ENCODE measurements at regions of chr2 and their contacts with region 1.

Region 1: DNA sequence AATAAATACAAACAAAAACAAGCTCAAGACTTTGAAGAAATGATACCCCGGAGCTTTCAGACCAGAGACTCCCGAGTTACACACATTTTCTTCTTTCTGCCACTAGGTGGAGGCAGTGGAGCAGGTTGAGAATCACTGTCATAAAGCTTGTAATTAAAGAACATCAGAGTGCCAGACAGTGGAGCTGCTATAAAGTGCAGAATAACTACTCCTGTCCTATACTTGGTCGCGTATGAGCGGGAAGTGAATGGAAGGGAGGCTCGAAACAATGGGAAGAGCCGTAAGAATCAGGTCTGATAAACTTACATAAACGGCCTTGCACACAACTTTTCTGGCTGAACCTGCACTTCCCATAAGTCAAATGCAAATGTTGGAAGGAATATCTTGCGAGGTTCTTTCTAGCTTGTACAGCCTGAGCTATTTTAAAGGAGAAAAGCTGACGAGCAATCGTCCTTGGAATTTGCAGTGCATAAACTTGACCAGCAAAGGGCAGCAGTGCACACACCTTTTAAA is 189.0 kb downstream of the RPIA start:
- DNase-seq: peak; percentile 84
- H3K4me3 ChIP-seq: peak overlapping the region; percentile 60
- H3K27ac ChIP-seq: peak overlapping the region; percentile 100
- H3K4me1 ChIP-seq: peaks cover 47% of the 10 kb centered on the region
- CTCF ChIP-seq: peak; percentile 80

Region 2: GRCh38 chr2:88753833-88754584 is 126.5 kb before region 1 on chr2:
- CTCF ChIA-PET with region 1: interaction called, 4 read pairs
- POLR2A ChIA-PET with region 1: interaction called, 93 read pairs
- intact Hi-C with region 1: no loop called
- DNase-seq: peak; percentile 98
- H3K4me3 ChIP-seq: peak overlapping the region; percentile 37
- H3K27ac ChIP-seq: peak overlapping the region; percentile 96
- H3K4me1 ChIP-seq: peaks cover 81% of the 10 kb centered on the region
- CTCF ChIP-seq: no peak

Region 3: GRCh38 chr2:88838165-88838635 is 42.3 kb before region 1 on chr2:
- CTCF ChIA-PET with region 1: interaction called, 7 read pairs
- POLR2A ChIA-PET with region 1: interaction called, 311 read pairs
- intact Hi-C with region 1: loop called (anchors 1 kb)
- DNase-seq: peak; percentile 100
- H3K4me3 ChIP-seq: peak overlapping the region; percentile 66
- H3K27ac ChIP-seq: peak overlapping the region; percentile 100
- H3K4me1 ChIP-seq: peaks cover 99% of the 10 kb centered on the region
- CTCF ChIP-seq: no peak

Region 4: DNA sequence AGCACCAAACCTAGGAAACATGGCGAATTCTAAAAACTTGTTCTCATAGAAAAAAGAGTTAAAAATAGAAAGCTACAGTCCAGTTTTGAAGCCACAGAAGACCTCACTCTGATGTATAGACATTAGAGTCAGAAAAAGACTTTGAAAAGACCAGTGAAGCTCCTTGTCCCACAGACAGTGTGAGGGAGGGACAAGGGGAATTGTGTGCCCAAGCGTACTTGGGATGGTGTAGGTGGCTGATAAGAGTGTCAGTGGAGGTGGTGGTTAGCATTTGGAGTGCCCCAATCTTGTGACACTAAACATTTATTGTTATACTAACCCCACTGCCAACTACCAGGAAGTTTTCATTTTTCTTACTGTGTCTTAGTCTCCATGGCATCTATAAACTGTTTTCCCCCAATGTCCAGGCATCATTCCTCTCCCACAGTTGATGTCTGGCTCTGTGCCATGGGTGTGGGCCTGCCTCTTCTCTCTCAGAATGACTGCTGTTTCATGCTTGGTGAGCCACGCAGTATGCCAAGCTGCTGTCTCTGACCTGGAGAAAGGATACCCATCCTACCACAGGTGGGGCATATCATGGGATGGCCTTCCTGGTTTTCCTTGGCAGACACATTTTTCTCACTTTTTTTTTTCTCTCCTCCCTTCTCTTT is 27.6 kb before region 1 on chr2:
- CTCF ChIA-PET with region 1: no interaction called
- POLR2A ChIA-PET with region 1: interaction called, 232 read pairs
- intact Hi-C with region 1: no loop called
- DNase-seq: peak; percentile 29
- H3K4me3 ChIP-seq: peak overlapping the region; percentile 8
- H3K27ac ChIP-seq: peak overlapping the region; percentile 100
- H3K4me1 ChIP-seq: peaks cover 100% of the 10 kb centered on the region
- CTCF ChIP-seq: no peak

Region 5: DNA sequence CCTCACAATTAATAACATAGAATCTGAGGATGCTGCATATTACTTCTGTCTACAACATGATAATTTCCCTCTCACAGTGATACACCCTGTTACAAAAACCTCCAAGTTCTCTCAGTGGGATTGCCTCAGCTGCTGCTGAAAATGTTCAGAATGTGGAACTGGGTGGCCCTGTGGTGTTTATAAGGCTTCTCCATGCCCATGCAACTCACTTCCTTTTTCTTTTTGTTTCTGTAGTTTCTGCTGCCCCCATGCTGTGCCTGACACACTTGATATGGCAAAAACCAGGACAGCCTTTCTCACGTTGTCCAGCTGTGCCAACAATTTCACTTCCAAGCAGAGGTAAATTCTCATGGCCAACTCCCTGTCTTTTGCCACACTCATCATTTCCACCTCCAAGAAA is 17.2 kb after region 1 on chr2:
- CTCF ChIA-PET with region 1: no interaction called
- POLR2A ChIA-PET with region 1: interaction called, 16 read pairs
- intact Hi-C with region 1: no loop called
- DNase-seq: no peak
- H3K4me3 ChIP-seq: peak overlapping the region; percentile 90
- H3K27ac ChIP-seq: peak overlapping the region; percentile 84
- H3K4me1 ChIP-seq: peaks cover 21% of the 10 kb centered on the region
- CTCF ChIP-seq: no peak

Region 6: DNA sequence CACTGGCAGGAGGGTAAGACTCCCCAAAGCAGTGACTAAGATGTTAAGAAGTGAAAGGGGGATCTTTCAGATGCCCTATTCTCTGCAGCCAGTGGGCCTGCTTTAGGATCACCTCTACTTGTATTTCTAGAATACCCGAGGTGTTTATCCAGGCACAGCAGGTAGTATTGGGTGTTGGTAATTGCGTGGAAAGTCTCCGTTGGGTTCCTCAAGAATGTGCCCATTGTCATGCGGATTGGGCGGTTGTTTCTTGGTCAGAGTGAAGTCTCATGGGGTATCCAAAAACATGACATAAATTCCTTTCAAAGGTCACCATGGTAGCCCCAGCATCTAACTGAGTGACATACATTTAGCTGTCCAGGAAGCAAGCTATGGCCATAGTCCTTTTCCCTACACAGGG is 119.7 kb after region 1 on chr2:
- CTCF ChIA-PET with region 1: no interaction called
- POLR2A ChIA-PET with region 1: no interaction called
- intact Hi-C with region 1: no loop called
- DNase-seq: no peak
- H3K4me3 ChIP-seq: no peak overlapping the region
- H3K27ac ChIP-seq: no peak overlapping the region
- H3K4me1 ChIP-seq: no peaks in the 10 kb centered on the region
- CTCF ChIP-seq: no peak